ENCODE measurements at regions of chr13 and their contacts with region 1.

Region 1: GRCh38 chr13:54980651-54981050 is 1952.0 kb downstream of the OLFM4 start:
- DNase-seq: no peak
- ATAC-seq: no peak
- H3K4me3 ChIP-seq: no peak overlapping the region
- H3K27ac ChIP-seq: no peak overlapping the region
- H3K4me1 ChIP-seq: no peaks in the 10 kb centered on the region
- H3K27me3 ChIP-seq: no peaks in the 10 kb centered on the region
- CTCF ChIP-seq: no peak
- POLR2A ChIP-seq: no peak

Region 2: DNA sequence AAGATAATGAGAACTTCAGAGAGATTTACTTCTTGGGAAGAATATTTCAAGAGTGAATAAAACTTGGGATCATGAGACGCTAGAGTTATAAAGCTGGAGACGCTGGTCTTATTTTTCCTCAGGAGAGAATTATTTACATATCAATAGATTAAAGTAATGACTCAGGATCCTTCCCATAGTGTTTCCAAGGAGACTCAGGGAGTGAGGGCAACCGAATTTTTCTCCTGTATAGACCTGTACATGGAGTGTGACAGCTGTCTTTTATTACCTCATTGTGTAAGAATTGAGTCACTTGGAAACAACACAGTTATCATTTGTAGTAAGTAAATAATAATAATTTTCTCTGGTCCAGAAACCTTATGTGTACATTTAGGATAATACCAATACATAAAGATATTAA is 46.5 kb before region 1 on chr13:
- intact Hi-C with region 1: loop called in 1 of 10 experiments (anchors 5 kb)
- DNase-seq: no peak
- ATAC-seq: no peak
- H3K4me3 ChIP-seq: no peak overlapping the region
- H3K27ac ChIP-seq: no peak overlapping the region
- H3K4me1 ChIP-seq: no peaks in the 10 kb centered on the region
- H3K27me3 ChIP-seq: no peaks in the 10 kb centered on the region
- CTCF ChIP-seq: no peak
- POLR2A ChIP-seq: no peak

Measured in heart left ventricle (tissue), 16 donors.